BJ (cell line): ENCODE measurements at regions of chr11 and their contacts with region 1.

Region 1: DNA sequence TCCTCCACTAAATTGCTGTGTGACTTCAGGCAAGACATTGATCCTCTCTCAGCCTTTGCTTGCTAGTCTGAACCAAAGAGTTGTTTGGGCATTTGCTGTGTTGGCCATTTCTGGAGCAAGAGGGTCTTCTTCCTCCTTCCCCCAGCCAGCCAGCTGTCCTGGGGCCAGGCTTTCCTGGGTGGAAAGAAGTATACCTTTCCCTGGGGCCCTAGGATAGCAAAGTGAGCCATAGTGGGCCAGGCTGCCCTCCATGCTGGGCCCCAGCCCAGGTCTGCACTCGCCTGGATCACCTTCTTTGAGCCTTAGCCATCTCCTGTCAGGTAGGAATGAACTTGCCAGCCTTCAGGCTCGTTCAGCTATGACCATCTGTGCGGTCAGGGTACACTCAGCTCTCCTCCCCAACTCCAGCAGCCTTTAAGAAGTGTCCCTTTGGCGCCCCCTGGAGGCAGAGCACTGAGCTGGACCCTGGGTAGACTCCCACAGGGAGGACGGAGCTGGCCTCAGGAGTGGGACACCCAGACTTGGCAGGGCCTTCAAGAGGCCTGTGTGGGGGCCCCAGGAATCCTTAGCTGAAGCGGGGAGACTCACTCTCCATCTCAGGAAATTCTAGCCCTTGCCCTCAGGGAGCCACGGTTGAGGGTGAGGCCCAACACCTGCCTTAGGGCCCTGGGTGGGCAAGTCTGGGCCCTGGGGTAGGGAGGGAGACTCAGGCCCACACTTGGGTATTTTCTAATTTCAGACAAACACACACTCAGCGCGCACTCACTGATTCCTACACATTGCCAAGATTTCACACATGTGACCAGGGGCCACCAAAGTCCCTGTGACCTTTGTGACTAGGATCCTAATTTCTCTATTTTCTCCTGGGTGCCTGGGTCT is 35.6 kb upstream of the TPBGL start:
- DNase-seq: peak; percentile 4
- H3K4me3 ChIP-seq: no peak overlapping the region
- H3K27me3 ChIP-seq: peaks cover 10% of the 10 kb centered on the region
- CTCF ChIP-seq: peak; percentile 95

Region 2: GRCh38 chr11:74895340-74896116 is 309.4 kb before region 1 on chr11:
- CTCF ChIA-PET with region 1: no interaction called
- POLR2A ChIA-PET with region 1: no interaction called
- DNase-seq: no peak
- H3K4me3 ChIP-seq: no peak overlapping the region
- H3K27me3 ChIP-seq: no peaks in the 10 kb centered on the region
- CTCF ChIP-seq: no peak

Region 3: GRCh38 chr11:75022759-75023396 is 182.0 kb before region 1 on chr11:
- CTCF ChIA-PET with region 1: interaction called, 60 read pairs
- POLR2A ChIA-PET with region 1: no interaction called
- DNase-seq: peak; percentile 16
- H3K4me3 ChIP-seq: no peak overlapping the region
- H3K27me3 ChIP-seq: no peaks in the 10 kb centered on the region
- CTCF ChIP-seq: peak; percentile 97

Region 4: GRCh38 chr11:75133976-75134375 is 70.9 kb before region 1 on chr11:
- CTCF ChIA-PET with region 1: interaction called, 309 read pairs
- POLR2A ChIA-PET with region 1: no interaction called
- DNase-seq: no peak
- H3K4me3 ChIP-seq: no peak overlapping the region
- H3K27me3 ChIP-seq: peaks cover 23% of the 10 kb centered on the region
- CTCF ChIP-seq: no peak

Region 5: DNA sequence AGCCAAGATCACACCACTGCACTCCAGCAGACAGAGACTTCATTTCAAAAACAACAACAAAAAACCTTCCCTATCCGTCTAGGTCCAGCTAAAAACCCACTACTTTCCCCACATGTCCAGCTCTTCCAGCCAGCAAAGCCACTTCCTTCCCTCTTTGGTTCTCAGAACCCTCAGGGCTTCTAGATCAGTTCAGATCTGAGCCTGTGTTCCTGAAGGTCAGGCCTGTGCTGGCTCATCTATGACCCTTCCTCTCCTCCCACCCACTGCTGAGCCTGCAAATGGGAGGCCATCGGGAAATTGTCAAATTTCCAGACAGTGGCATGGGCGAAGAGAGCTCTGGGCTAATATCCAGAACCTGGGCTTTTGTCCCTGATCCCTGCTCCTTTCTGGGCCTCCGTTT is 16.3 kb before region 1 on chr11:
- CTCF ChIA-PET with region 1: interaction called, 13 read pairs
- POLR2A ChIA-PET with region 1: no interaction called
- DNase-seq: no peak
- H3K4me3 ChIP-seq: no peak overlapping the region
- H3K27me3 ChIP-seq: peaks cover 4% of the 10 kb centered on the region
- CTCF ChIP-seq: no peak

Region 6: DNA sequence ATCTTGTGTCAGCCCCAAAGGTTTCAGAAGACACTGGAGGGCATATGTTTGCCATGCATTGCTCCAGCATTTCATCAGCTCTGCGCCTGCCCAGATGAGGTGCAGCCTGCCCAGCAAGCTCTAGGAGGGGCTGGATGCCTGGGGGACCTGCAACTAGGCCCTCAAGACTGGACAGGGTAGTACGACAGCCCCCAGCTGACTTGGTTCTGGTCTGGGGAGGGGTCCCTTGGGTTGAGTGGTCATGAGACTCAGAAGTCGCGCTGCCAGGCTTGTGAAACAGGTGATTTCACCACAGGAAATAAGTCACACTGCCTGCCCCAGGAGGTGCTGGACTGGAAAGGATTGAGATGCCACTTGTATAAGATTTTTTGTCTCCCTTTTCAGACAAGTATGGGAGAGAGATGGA is 59.0 kb after region 1 on chr11:
- CTCF ChIA-PET with region 1: no interaction called
- POLR2A ChIA-PET with region 1: no interaction called
- DNase-seq: no peak
- H3K4me3 ChIP-seq: no peak overlapping the region
- H3K27me3 ChIP-seq: peaks cover 2% of the 10 kb centered on the region; the same call in 1 of the 2 replicates
- CTCF ChIP-seq: no peak